ENCODE measurements at regions of chr10 and their contacts with region 1.

Region 1: GRCh38 chr10:14009371-14010100 is 321.2 kb downstream of the FRMD4A start:
- DNase-seq: peak; percentile 47
- H3K4me3 ChIP-seq: peak overlapping the region; percentile 1 to 79 (median 26)
- H3K27ac ChIP-seq: peak overlapping the region; percentile 93
- H3K4me1 ChIP-seq: peaks cover 39% of the 10 kb centered on the region
- H3K27me3 ChIP-seq: no peaks in the 10 kb centered on the region
- CTCF ChIP-seq: no peak
- POLR2A ChIP-seq: no peak

Region 2: GRCh38 chr10:13470270-13470669 is 539.3 kb before region 1 on chr10:
- CTCF ChIA-PET with region 1: no interaction called
- POLR2A ChIA-PET with region 1: no interaction called
- dilution Hi-C with region 1: no loop called
- intact Hi-C with region 1: no loop called
- DNase-seq: no peak
- H3K4me3 ChIP-seq: no peak overlapping the region
- H3K27ac ChIP-seq: no peak overlapping the region
- H3K4me1 ChIP-seq: no peaks in the 10 kb centered on the region
- H3K27me3 ChIP-seq: no peaks in the 10 kb centered on the region
- CTCF ChIP-seq: no peak
- POLR2A ChIP-seq: no peak

Region 3: DNA sequence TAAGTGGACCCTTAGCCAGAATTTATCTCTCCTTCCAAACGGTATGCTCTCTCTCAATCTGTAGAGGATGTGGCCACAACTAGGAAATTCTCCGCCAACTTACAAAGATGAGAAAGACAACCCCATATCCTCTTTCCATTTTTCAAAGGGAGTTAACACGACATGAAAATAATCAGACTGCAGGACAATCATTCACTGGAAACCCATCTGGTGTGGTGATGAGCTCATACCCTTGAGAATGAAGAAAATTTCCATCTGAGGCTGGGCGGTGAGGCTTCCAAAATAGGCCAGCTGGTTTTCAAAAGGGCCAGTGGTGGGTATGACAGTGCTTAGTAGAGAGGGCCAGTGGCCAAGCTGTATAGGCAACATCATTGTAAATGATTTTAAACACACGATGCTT is 48.4 kb before region 1 on chr10:
- CTCF ChIA-PET with region 1: no interaction called
- POLR2A ChIA-PET with region 1: no interaction called
- dilution Hi-C with region 1: no loop called
- intact Hi-C with region 1: loop called (anchors 1 kb)
- DNase-seq: peak; percentile 47
- H3K4me3 ChIP-seq: no peak overlapping the region
- H3K27ac ChIP-seq: no peak overlapping the region
- H3K4me1 ChIP-seq: peaks cover 20% of the 10 kb centered on the region
- H3K27me3 ChIP-seq: no peaks in the 10 kb centered on the region
- CTCF ChIP-seq: no peak
- POLR2A ChIP-seq: no peak